ENCODE measurements at regions of chr19 and their contacts with region 1.

Region 1: GRCh38 chr19:5561559-5561958 is 6.2 kb downstream of the TINCR start:
- DNase-seq: no peak
- H3K4me3 ChIP-seq: no peak overlapping the region
- H3K27ac ChIP-seq: no peak overlapping the region
- H3K4me1 ChIP-seq: no peaks in the 10 kb centered on the region
- H3K27me3 ChIP-seq: peaks cover under 1% of the 10 kb centered on the region
- CTCF ChIP-seq: peak in 2 of 6 experiments; percentile 34 to 35
- POLR2A ChIP-seq: no peak

Region 2: DNA sequence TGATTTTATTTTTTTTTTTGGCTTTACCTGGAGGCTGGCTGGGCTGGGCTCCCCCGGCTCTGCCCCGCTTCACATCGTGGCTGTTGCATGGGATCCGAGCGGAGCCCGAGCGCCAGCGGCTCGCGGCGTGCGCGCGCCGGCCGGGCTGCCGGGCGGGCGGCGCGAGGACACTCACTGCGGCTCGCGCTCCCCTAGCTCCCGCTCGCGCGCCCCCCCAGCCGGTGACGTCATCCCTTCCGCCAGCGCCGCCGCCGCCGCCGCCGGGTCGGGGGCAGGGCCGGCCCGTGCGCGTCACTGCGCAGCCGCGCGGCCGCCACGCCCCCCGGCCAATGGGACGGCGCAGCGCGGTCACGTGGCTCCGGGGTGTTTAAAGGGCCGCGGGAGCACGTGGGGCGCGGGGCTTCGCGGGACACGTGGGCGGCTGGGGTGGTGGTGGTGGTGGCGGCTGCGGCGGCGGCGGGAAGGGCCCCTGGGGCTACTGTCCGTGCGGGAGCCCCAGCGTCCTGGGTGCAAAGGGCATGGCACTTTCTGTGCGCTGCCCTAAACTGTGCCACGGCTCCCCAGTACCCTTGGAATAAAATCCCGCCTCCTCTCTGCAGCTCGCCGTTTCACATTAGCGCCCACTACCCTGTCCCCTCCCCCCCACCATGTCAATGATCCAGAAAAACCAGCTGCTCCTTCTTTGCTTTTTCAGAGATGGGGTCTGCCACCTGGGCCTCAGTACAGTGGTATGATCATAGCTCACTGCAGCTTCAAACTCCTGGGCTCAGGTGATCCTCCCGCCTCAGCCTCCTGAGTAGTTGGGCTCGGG is 220.7 kb before region 1 on chr19 and contains the start of gene PTPRS:
- intact Hi-C with region 1: loop called in 1 of 2 experiments (anchors 10 kb)
- DNase-seq: peak; percentile 70 to 90 (median 80)
- H3K4me3 ChIP-seq: peak within 1 kb of the TSS in 1 of 4 donors; percentile 62
- H3K27ac ChIP-seq: peak within 1 kb of the TSS in 1 of 5 donors; percentile 17
- H3K4me1 ChIP-seq: peaks cover 6% of the 10 kb centered on the region in 2 donors
- H3K27me3 ChIP-seq: peaks cover 7% of the 10 kb centered on the region
- CTCF ChIP-seq: no peak
- POLR2A ChIP-seq: peak in 1 of 2 donors; percentile 36
- total RNA-seq, gene PTPRS: 27.7 to 376 (median 195) TPM

Region 3: GRCh38 chr19:5665796-5666513 is 104.4 kb after region 1 on chr19:
- intact Hi-C with region 1: no loop called
- DNase-seq: peak in 2 of 7 donors; percentile 69 to 77
- H3K4me3 ChIP-seq: no peak overlapping the region
- H3K27ac ChIP-seq: peak overlapping the region in 3 of 5 donors; percentile 17 to 40 (median 24)
- H3K4me1 ChIP-seq: peaks cover 0 to 9% of the 10 kb centered on the region in 2 donors
- H3K27me3 ChIP-seq: no peaks in the 10 kb centered on the region
- CTCF ChIP-seq: peak in 5 of 6 experiments; percentile 8 to 42 (median 31)
- POLR2A ChIP-seq: no peak

Measured in adrenal gland (tissue), 19 donors.